HEK293 (cell line): ENCODE measurements at regions of chr1 and their contacts with region 1.

Region 1: GRCh38 chr1:212455803-212456528 is 23.2 kb downstream of the NENF start:
- H3K4me3 ChIP-seq: no peak overlapping the region
- H3K27ac ChIP-seq: no peak overlapping the region
- H3K4me1 ChIP-seq: no peaks in the 10 kb centered on the region
- CTCF ChIP-seq: peak; percentile 78

Region 2: DNA sequence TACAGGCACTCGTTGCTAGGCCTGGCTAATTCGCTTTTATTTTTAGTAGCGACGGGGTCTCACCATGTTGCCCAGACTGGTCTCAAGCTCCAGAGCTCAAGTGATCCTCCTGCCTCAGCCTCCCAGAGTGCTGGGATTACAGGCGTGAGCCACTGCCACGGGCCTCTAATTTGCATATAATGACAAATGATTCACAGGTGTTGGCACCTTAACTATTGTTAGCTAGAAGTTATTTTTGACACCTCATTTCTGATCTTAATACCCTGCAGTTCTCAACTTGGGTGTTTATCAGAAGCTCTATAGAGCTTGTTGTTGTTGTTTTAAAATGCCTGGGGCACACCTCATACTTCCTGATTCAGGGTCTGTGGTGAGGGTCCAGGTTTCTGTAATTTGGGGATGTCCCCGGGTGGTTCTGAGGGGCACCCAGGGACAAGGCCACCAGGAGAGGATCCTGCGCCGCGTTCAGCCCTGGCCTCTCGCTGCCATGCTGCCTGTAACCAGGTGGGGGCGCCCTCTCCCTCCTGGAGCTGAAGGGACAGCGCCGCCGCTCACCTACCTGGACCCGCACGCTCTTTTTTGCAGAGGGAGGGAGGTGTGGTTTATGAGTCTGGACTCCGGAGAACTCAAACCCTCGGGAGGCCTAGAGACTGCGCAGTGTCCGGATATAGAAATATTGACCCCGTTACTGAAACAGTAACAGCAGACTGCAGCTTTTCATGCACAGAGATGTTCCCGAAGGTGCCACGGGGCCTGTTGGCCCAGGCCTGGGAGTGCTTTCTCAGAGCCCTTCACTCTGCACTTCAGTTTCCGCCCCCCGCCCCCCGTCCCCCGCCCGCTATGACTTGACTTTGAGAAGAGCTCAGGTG is 757.6 kb before region 1 on chr1:
- CTCF ChIA-PET with region 1: interaction called, 23 read pairs
- POLR2A ChIA-PET with region 1: no interaction called
- H3K4me3 ChIP-seq: no peak overlapping the region
- H3K27ac ChIP-seq: no peak overlapping the region
- H3K4me1 ChIP-seq: no peaks in the 10 kb centered on the region
- CTCF ChIP-seq: peak; percentile 93

Region 3: DNA sequence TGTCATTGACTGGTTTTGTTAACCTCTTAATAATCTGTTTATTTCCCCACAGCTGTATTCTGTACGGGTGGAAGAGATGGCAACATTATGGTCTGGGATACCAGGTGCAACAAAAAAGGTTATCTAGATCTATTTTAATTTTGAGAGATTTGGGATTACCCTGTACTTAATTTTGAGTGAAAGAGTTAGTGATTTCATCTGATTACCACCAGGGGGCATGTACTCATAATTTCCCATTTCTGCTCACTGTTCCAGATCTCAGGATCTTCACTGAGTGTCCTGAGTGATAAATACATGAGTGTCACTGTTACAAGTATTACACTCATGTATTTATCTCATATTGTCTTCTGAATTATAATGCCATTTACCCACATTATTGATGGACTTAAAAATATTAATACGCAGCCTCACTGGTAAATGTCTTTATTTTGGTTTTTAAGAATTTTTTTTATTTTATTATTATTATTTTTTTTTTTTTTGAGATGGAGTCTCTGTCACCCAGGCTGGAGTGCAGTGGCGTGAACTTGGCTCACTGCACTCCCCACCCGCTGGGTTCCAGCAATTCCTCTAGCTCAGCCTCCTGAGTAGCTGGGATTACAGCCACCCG is 393.0 kb before region 1 on chr1:
- CTCF ChIA-PET with region 1: interaction called, 33 read pairs
- POLR2A ChIA-PET with region 1: no interaction called
- H3K4me3 ChIP-seq: no peak overlapping the region
- H3K27ac ChIP-seq: no peak overlapping the region
- H3K4me1 ChIP-seq: no peaks in the 10 kb centered on the region
- CTCF ChIP-seq: peak; percentile 21; the same call in 1 of the 2 replicates

Region 4: GRCh38 chr1:212375986-212376385 is 80.0 kb before region 1 on chr1:
- CTCF ChIA-PET with region 1: interaction called, 12 read pairs
- POLR2A ChIA-PET with region 1: no interaction called
- H3K4me3 ChIP-seq: no peak overlapping the region
- H3K27ac ChIP-seq: no peak overlapping the region
- H3K4me1 ChIP-seq: no peaks in the 10 kb centered on the region
- CTCF ChIP-seq: no peak

Region 5: GRCh38 chr1:212477014-212477679 is 21.2 kb after region 1 on chr1:
- CTCF ChIA-PET with region 1: interaction called, 34 read pairs
- POLR2A ChIA-PET with region 1: no interaction called
- H3K4me3 ChIP-seq: no peak overlapping the region
- H3K27ac ChIP-seq: no peak overlapping the region
- H3K4me1 ChIP-seq: no peaks in the 10 kb centered on the region
- CTCF ChIP-seq: peak; percentile 73

Region 6: DNA sequence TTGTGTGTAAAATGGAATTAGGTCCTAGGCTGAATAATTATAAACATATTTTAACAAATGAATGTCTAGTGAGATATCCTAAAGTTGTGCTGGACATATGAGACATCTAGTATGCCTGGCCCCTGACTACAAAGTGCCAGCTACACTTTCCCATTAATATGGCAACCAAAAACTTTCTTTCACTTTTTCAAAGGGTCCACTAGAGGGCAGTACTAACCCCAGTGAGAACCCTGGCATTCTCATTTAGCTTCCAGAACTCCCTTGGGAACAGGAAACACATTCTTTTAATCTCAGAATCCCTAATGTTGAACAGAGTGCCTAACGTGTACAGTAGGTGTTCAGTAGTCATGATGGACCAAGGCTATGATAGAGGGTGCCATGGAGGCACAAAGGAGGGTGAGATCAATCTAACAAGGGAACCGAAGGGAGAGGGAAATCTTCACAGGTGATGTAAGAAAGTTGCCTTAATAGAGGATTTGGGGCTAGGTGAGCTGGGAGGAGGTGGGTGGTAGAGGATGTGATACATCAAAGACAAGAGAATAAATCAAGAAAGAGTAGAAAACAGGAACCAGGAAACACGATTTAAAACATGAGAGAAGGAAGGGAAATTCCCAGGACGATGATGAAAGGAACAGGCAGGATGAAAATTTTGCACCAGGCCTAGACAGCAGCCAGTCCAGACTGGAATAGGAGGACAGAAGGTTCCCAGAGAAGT is 294.0 kb after region 1 on chr1:
- CTCF ChIA-PET with region 1: interaction called, 24 read pairs
- POLR2A ChIA-PET with region 1: no interaction called
- H3K4me3 ChIP-seq: no peak overlapping the region
- H3K27ac ChIP-seq: no peak overlapping the region
- H3K4me1 ChIP-seq: no peaks in the 10 kb centered on the region
- CTCF ChIP-seq: peak; percentile 39; the same call in 1 of the 2 replicates

Region 7: GRCh38 chr1:212967801-212968200 is 511.8 kb after region 1 on chr1:
- CTCF ChIA-PET with region 1: no interaction called
- POLR2A ChIA-PET with region 1: no interaction called
- H3K4me3 ChIP-seq: no peak overlapping the region
- H3K27ac ChIP-seq: no peak overlapping the region
- H3K4me1 ChIP-seq: no peaks in the 10 kb centered on the region
- CTCF ChIP-seq: peak; percentile 31; the same call in 1 of the 2 replicates